Activated naive CD4-positive, alpha-beta T cell treated with anti-CD3 and anti-CD28 coated beads for 36 hours (primary cell): ENCODE measurements at regions of chr6 and their contacts with region 1.

Region 1: DNA sequence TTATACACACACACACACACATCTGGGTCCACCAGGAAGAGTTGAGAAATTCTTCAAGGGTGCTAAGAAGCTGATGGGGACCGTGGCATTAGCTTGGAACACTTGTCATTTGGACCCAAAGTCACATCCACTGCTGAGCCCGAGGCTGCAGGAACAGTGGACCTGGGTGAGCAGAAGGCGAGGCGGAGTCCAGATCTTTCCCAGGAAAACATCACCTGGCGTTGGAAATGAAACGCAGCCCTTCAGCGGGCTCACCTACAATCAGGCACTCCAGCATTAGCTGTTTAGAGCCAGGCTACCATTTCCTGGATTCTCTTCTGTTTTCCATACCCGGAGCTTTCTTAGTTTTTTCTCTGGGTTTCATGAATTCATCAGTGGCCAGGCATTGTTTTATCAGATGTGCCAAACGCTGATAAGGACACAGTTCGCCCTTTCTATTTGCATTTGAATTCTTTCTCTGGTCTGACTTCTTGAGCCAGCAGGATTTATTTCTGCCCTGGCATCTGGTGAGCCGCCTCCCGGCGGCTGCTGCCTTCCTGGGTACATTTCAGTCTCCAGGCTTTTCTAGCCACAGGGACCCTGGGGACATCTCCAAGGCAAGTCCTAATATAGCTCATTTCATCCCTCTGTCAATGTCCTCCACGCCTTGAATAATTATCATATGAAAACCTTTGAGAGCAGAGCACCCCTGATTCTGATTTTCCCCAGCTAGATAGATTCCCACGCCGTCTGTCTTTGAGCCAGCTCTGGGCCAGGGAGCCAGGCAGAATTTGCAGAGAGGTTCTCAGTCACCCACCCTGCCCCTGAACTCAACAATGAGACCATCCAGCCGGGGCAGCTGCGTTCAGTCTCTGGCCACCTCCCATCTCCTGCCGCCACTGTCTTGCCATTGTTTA is 170.9 kb downstream of the TTLL2 start:
- DNase-seq: no peak
- H3K4me3 Mint-ChIP-seq: no peak overlapping the region
- H3K27ac Mint-ChIP-seq: no peak overlapping the region
- H3K4me1 Mint-ChIP-seq: no peaks in the 10 kb centered on the region
- H3K27me3 Mint-ChIP-seq: peaks cover 26% of the 10 kb centered on the region

Region 2: GRCh38 chr6:167298153-167298552 is 197.6 kb before region 1 on chr6:
- CTCF ChIA-PET with region 1: no interaction called
- intact Hi-C with region 1: loop called (anchors 5 kb)
- DNase-seq: no peak
- H3K4me3 Mint-ChIP-seq: no peak overlapping the region
- H3K27ac Mint-ChIP-seq: no peak overlapping the region
- H3K4me1 Mint-ChIP-seq: no peaks in the 10 kb centered on the region
- H3K27me3 Mint-ChIP-seq: no peaks in the 10 kb centered on the region